ENCODE measurements at regions of chr12 and their contacts with region 1.

Region 1: DNA sequence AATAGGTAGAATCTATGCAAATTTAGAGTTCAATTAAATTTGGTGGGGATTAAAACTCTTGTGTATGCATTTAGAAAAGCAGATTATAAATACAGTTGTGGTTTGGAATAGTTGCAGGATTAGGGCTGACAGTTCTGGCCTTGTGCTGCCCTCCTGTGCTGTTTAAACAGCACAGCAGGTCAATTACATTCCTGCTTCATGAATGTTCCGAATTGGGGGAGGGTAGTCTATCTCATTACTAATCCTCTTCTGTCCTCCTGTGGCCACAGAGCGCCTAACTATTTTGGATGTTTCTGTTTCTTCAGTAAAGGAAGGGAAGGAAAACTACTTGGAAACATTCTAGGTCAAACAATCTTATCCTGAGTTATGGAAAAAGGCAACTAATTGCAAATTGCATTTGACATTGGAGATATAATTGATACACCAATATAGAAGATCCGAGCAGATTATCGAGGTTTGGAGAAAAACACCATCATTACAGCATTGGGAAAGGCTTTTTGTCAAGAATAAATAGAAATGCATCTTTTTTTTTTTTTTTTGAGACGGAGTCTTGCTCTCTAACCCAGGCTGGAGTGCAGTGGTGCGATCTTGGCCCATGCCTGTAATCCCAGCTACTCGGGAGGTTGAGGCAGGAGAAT is 8.7 kb upstream of the GPR19 start:
- DNase-seq: peak; percentile 83
- H3K4me3 ChIP-seq: no peak overlapping the region
- H3K27ac ChIP-seq: no peak overlapping the region
- H3K4me1 ChIP-seq: peaks cover under 1% of the 10 kb centered on the region
- CTCF ChIP-seq: peak; percentile 94

Region 2: GRCh38 chr12:12039897-12040296 is 664.8 kb before region 1 on chr12:
- CTCF ChIA-PET with region 1: no interaction called
- POLR2A ChIA-PET with region 1: no interaction called
- intact Hi-C with region 1: loop called (anchors 5 kb)
- DNase-seq: no peak
- H3K4me3 ChIP-seq: no peak overlapping the region
- H3K27ac ChIP-seq: no peak overlapping the region
- H3K4me1 ChIP-seq: no peaks in the 10 kb centered on the region
- CTCF ChIP-seq: no peak

Region 3: GRCh38 chr12:12376646-12377448 is 327.9 kb before region 1 on chr12:
- CTCF ChIA-PET with region 1: no interaction called
- POLR2A ChIA-PET with region 1: no interaction called
- intact Hi-C with region 1: loop called (anchors 1 kb)
- DNase-seq: peak; percentile 87
- H3K4me3 ChIP-seq: no peak overlapping the region
- H3K27ac ChIP-seq: no peak overlapping the region
- H3K4me1 ChIP-seq: no peaks in the 10 kb centered on the region
- CTCF ChIP-seq: peak; percentile 93

Region 4: DNA sequence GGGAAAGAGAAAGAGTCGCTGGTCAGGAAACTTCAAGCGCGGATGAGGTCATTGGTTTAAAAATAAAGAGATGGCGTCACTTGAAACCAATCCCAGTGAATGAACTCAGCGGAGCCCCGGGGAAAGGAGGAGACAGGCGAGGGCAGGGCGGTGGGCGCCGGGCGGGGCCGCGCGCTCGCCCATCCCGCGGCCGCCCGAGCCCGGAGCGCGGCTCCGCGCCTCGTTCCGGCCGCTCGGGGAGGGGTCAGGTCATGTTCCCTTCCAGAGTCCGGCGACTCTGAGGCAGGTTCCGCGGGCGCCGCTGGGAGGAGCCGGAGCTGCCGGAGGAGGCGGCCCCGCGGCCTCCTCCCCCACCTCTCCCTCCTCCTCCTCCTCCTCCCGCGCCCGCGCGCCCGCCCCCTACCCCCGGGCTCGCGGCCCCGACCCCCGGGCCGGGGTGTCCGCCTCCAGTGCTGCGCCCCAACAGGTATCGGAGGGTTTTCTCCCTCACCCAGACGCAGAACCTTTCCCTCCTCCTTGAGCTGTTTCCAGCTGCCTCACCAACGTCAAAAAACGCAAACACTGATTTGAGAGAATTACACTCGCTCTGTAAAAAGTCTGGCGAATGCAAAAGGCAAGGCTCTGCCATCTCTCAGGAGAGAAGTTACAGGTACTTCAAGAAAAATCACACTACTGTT is 142.0 kb before region 1 on chr12 and contains the start of gene DUSP16:
- CTCF ChIA-PET with region 1: no interaction called
- POLR2A ChIA-PET with region 1: no interaction called
- intact Hi-C with region 1: loop called (anchors 5 kb)
- DNase-seq: peak; percentile 79
- H3K4me3 ChIP-seq: peak within 1 kb of the TSS; percentile 72
- H3K27ac ChIP-seq: peak within 1 kb of the TSS; percentile 59
- H3K4me1 ChIP-seq: peaks cover 26% of the 10 kb centered on the region
- CTCF ChIP-seq: peak; percentile 17; the same call in 1 of the 2 replicates
- total RNA-seq, gene DUSP16: 2.8 and 3.7 TPM in 2 replicates

Region 5: DNA sequence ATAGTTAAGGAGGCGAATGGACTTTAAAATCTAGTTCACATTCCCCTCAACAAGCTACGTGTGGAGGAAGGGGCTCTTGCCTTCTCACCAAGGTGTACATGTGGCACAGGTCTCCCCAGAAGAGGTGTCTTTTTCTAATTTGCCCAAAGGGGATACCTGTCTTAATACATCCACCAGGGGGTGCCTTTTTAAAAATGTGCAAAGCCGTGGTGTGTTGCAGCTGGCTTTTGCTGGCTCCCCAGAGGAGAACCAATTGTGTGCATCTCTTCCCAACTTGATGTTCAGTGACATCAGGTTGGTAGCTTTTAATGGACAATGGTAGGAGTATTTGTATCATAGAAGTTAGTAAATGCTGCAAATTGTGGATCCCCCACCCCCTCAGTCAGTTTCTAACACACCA is 59.2 kb before region 1 on chr12:
- CTCF ChIA-PET with region 1: no interaction called
- POLR2A ChIA-PET with region 1: interaction called, 3 read pairs
- intact Hi-C with region 1: loop called (anchors 1 kb)
- DNase-seq: peak; percentile 64
- H3K4me3 ChIP-seq: no peak overlapping the region
- H3K27ac ChIP-seq: no peak overlapping the region
- H3K4me1 ChIP-seq: no peaks in the 10 kb centered on the region
- CTCF ChIP-seq: peak; percentile 73

Region 6: DNA sequence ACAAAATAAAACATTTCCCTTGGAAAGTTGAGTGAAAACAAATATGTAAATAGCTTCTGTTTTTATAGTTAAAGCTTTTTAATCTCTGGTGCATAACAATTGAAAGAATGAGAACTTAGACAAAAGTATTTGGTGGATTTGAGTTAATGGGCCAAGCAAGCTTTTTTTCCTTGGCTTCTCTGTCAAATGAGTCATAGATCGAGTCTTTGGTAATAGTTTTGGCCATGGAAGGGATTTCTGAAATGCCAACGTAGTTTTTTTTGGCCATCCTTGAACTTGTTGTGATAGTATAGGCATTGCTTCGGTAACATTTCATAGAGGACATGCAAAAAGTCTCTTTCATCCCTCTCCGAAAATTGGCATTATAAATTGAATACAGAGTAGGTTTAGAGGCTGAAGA is 43.6 kb before region 1 on chr12:
- CTCF ChIA-PET with region 1: no interaction called
- POLR2A ChIA-PET with region 1: interaction called, 3 read pairs
- intact Hi-C with region 1: loop called (anchors 2 kb)
- DNase-seq: no peak
- H3K4me3 ChIP-seq: no peak overlapping the region
- H3K27ac ChIP-seq: no peak overlapping the region
- H3K4me1 ChIP-seq: peaks cover 2% of the 10 kb centered on the region
- CTCF ChIP-seq: no peak

Measured in OCI-LY7 (cell line).